Sciatic nerve (tissue), 2 donors: ENCODE measurements at regions of chr12 and their contacts with region 1.

Region 1: DNA sequence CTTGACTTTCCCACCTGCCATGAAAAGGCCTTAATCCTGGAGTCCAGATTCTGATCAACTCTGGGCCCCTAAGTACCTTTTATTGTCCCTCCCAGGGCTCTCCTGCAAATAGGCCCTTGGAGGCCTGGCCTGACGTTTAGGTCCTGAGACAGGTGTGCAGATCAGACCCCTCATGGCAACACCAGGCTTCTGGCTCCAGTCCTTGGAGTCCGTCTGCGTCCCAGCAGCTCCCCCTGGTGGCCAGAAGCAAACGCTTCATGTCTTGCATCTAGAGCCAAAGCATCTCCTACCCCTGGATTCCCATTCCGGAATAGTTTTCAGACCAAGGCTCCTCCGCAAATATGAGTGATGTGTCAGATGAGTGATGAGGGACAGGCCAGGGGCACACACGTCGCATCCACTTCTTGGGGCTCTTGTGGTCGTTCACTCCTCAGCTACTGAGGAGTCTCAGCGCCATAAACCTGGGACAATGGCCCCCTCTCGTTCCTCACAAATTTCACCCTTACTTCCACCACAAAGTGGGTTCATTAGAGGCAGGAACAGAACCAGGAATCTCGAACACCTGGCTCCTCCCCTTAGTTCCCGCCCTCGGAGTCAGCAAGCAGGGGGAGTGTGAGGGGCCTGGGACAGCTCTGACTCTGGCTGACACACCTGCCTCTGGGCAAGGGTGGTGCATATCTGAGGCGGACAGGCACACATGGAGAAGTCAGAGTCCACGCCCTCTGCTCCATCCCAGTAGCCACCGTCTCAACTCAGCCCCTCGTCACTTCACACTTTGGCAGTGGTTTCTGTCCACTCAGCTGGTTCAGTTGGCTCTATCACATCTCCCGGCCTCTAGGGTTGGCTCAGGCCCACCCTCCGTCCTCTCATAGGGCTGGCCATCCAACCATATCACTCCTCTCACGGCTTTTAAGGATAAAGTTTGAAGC is 77.9 kb upstream of the PWP1 start:
- DNase-seq: peak; percentile 91
- ATAC-seq: peak; percentile 86

Region 2: DNA sequence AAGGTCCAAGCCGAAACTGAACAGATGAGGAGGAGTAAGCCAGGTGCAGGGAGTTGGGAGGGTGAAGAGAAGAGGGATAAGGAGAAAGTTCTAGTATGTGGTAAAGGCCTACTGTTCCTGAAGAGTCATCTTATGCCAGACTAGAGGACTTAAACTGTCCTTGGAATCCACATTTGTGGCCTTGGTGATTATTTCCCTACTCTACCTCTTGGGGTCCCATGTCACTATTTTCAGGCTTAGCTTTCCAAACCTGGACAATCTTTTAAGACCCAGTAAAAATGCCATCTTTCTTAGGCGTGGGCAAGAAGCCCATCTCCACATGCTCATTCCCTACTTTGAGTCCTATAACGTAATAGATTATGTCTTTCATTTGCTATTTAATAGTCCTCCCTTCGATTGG is 474.3 kb before region 1 on chr12:
- intact Hi-C with region 1: loop called (anchors 1 kb)
- DNase-seq: no peak
- ATAC-seq: no peak

Region 3: GRCh38 chr12:107748472-107748871 is 140.7 kb after region 1 on chr12:
- intact Hi-C with region 1: no loop called
- DNase-seq: no peak
- ATAC-seq: no peak